H1 (cell line): ENCODE measurements at regions of chrX and their contacts with region 1.

Region 1: DNA sequence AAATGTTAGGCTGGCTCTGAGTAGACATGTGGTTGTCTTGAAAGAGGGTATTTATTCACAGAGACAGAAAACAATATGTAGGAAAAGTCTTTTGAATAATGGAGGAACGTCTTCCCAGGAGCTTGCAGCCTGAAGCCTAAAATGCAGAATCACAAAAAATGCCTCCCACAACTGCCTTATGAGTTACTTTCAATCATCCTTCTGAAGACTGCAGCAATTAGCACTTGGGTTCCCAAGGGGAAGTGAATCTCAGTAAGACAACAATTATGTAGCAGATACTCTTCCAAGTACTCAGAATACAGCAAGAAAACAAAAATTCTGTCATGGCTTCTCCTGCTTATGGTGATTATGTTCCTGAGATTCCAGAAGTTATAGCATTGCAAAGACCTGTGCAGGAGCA is 166.6 kb upstream of the TBL1X start:
- DNase-seq: no peak
- H3K4me3 ChIP-seq: no peak overlapping the region
- H3K27ac ChIP-seq: no peak overlapping the region
- H3K4me1 ChIP-seq: peaks cover 0 to 4% (median 0%) of the 10 kb centered on the region in 4 experiments; a peak in 1 of 7 replicates
- H3K27me3 ChIP-seq: peaks cover 0 to 10% (median 7%) of the 10 kb centered on the region in 4 experiments; a peak in 5 of 7 replicates
- CTCF ChIP-seq: no peak
- EP300 ChIP-seq: no peak
- POLR2A ChIP-seq: no peak
- RAD21 ChIP-seq: no peak

Region 2: DNA sequence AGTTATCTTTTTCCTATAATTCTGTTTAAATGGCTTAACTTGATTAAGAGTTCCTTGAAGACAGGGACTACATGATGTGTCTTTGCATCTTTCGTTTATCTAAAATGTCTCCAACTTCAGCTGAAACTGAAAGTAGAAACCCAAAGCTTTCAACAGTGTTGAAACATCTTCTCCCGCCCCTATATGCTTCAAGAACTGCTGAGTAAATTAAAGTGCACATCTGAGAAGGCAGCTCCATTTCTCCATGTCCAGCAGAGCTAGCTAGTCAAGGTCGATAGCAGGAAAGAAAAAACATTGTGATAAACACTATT is 19.0 kb before region 1 on chrX:
- CTCF ChIA-PET with region 1: no interaction called
- POLR2A ChIA-PET with region 1: no interaction called
- DNase-seq: no peak
- H3K4me3 ChIP-seq: no peak overlapping the region
- H3K27ac ChIP-seq: no peak overlapping the region
- H3K4me1 ChIP-seq: no peaks in the 10 kb centered on the region
- H3K27me3 ChIP-seq: no peaks in the 10 kb centered on the region
- CTCF ChIP-seq: no peak
- EP300 ChIP-seq: no peak
- POLR2A ChIP-seq: no peak
- RAD21 ChIP-seq: no peak

Region 3: DNA sequence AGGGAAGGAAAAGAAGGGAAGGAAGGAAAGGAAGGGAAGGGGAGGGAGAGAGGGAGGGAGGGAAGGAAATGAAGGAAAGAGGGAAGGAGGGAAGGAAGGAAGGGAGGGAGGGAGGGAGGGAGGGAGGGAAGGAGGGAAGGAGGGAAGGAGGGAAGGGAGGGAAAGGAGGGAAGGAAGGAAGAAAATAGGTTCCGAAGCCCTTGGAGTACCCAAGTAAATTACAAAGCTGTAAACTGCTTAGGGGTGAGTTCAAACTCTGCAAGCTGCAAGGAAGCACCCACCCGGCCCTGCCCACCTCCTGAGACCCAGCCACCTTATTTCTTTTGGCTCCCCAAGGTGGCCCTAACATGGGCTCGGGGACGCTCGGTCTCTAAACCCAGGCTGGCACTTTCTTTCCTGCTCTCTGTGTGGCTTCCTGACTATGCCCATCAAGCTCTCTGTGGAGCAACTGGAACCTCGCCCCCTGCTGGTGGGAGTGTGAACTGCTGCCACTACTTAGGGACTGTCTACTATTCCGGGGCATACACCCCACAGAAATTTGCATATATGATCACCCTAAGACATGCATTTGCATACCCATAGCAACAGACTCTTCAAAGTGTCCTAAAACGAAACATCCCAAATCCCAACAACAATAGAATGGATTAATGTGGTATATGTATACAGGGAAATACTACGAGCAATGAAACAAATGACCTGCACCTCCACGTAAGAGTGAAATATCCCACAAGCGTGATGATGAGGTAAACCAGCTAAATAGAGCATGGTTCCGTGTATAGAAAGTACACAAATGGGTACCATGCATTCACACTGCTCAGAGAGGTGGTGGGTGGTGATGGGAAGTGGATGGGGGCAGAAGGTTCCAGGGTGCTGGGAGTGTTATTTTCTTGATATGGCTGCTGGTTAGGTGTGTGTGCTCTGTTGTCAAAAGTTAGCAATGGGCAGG is 15.0 kb after region 1 on chrX:
- CTCF ChIA-PET with region 1: interaction called, 24 read pairs
- POLR2A ChIA-PET with region 1: interaction called, 3 read pairs
- DNase-seq: peak in 1 of 2 experiments; percentile 79
- H3K4me3 ChIP-seq: no peak overlapping the region
- H3K27ac ChIP-seq: no peak overlapping the region
- H3K4me1 ChIP-seq: no peaks in the 10 kb centered on the region; a peak in 2 of 7 replicates
- H3K27me3 ChIP-seq: no peaks in the 10 kb centered on the region
- CTCF ChIP-seq: peak; percentile 43 to 73 (median 72)
- EP300 ChIP-seq: no peak
- POLR2A ChIP-seq: no peak
- RAD21 ChIP-seq: peak; percentile 46 to 65; a peak in 3 of 4 replicates

Region 4: GRCh38 chrX:9429781-9430180 is 131.6 kb after region 1 on chrX:
- CTCF ChIA-PET with region 1: no interaction called
- POLR2A ChIA-PET with region 1: no interaction called
- DNase-seq: no peak
- H3K4me3 ChIP-seq: no peak overlapping the region
- H3K27ac ChIP-seq: no peak overlapping the region
- H3K4me1 ChIP-seq: no peaks in the 10 kb centered on the region
- H3K27me3 ChIP-seq: no peaks in the 10 kb centered on the region
- CTCF ChIP-seq: no peak
- EP300 ChIP-seq: no peak
- POLR2A ChIP-seq: no peak
- RAD21 ChIP-seq: no peak